Colonic mucosa (tissue), 4 donors: ENCODE measurements at regions of chr17 and their contacts with region 1.

Region 1: GRCh38 chr17:42027961-42028790 is 8.3 kb downstream of the NKIRAS2 start:
- DNase-seq: no peak
- H3K4me3 ChIP-seq: no peak overlapping the region
- H3K27ac ChIP-seq: no peak overlapping the region
- H3K4me1 ChIP-seq: peaks cover 13% of the 10 kb centered on the region
- H3K27me3 ChIP-seq: no peaks in the 10 kb centered on the region
- CTCF ChIP-seq: no peak

Region 2: GRCh38 chr17:41965694-41966462 is 62.3 kb before region 1 on chr17:
- intact Hi-C with region 1: loop called (anchors 2 kb)
- DNase-seq: peak; percentile 93
- H3K4me3 ChIP-seq: peak overlapping the region; percentile 69
- H3K27ac ChIP-seq: peak overlapping the region; percentile 82
- H3K4me1 ChIP-seq: peaks cover 4% of the 10 kb centered on the region
- H3K27me3 ChIP-seq: no peaks in the 10 kb centered on the region
- CTCF ChIP-seq: no peak

Region 3: DNA sequence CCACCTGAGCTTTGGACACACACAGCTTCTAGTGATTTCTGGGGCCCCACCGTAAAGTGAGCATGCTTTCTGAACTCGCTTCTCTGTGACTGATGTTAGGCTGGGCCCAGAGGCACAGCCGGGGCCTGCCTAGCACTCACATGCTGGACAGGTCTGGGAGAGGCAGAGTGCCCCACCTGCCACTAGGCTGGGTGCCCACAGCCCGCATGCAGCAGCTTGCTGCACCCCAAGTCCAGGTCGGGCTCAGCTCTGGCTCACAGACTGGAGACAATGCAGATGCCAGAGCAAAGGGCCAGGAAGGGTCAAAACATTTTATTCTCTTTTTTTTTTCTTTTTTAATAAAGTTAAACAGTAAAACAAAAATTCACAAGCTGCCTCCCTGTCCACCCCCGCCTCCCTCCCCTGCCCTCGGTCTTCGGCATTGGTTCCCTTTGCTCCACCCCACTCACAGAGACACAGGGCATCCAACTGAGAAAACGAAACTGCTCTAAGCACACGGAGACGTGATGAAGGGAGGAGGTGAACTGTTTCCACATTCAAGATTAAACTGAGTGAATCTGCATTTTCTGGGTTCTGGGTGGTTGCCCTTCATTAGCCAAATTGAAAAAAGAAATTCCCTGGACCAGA is 51.9 kb before region 1 on chr17:
- intact Hi-C with region 1: no loop called
- DNase-seq: no peak
- H3K4me3 ChIP-seq: no peak overlapping the region
- H3K27ac ChIP-seq: no peak overlapping the region
- H3K4me1 ChIP-seq: no peaks in the 10 kb centered on the region
- H3K27me3 ChIP-seq: no peaks in the 10 kb centered on the region
- CTCF ChIP-seq: no peak

Region 4: GRCh38 chr17:42101513-42102319 is 73.5 kb after region 1 on chr17:
- intact Hi-C with region 1: loop called (anchors 5 kb)
- DNase-seq: peak; percentile 82
- H3K4me3 ChIP-seq: no peak overlapping the region
- H3K27ac ChIP-seq: no peak overlapping the region
- H3K4me1 ChIP-seq: no peaks in the 10 kb centered on the region
- H3K27me3 ChIP-seq: peaks cover 15% of the 10 kb centered on the region
- CTCF ChIP-seq: peak; percentile 90